ENCODE measurements at regions of chr13 and their contacts with region 1.

Region 1: DNA sequence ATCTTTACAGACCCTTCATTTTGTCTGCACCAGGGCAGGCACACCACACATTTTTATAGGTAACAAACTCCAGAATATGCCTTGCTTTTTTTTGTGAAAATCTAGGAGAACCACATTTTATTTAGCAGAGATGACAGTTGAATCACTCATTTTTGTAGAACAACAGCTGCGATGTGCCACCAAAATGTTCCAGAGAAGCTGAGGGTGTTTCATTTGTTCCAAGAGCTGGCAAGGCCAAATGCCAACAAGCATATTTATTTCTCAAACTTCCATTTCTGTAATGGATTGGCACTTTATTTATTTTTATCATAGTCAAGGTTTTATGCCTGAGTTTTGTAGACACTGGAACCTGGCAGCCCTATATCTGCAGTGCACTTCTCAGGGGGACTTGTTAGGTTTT is 10.4 kb downstream of the OLFM4 start:
- DNase-seq: no peak
- H3K4me3 ChIP-seq: no peak overlapping the region
- H3K27ac ChIP-seq: no peak overlapping the region
- H3K4me1 ChIP-seq: no peaks in the 10 kb centered on the region
- H3K27me3 ChIP-seq: no peaks in the 10 kb centered on the region
- CTCF ChIP-seq: no peak

Region 2: DNA sequence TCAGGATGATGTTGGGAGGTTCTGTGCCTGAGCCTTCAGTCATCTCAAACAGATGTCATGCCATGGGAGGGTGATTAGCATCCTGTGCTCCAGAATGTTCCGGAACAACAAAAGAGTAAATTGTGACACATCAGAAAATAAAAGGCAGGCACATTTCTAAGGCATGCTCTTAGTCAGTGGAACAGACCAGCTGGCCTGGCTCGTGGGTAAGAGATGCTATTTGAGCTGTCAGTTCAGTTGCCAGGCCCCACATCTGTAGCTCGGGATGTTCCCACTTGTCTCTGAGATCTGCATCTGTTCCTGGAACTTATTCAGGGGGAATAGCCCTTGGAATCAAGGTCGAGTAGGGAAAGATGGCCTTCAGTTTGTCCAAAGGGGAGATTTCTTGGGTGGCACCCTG is 15.6 kb after region 1 on chr13:
- intact Hi-C with region 1: loop called (anchors 1 kb)
- DNase-seq: no peak
- H3K4me3 ChIP-seq: no peak overlapping the region
- H3K27ac ChIP-seq: no peak overlapping the region
- H3K4me1 ChIP-seq: no peaks in the 10 kb centered on the region
- H3K27me3 ChIP-seq: no peaks in the 10 kb centered on the region
- CTCF ChIP-seq: no peak

Measured in ascending aorta (tissue), 2 donors.